ENCODE measurements at regions of chr9 and their contacts with region 1.

Region 1: GRCh38 chr9:38352530-38353328 is 39.8 kb upstream of the ALDH1B1 start:
- DNase-seq: no peak
- ATAC-seq: no peak
- H3K4me3 Mint-ChIP-seq: no peak overlapping the region
- H3K27ac Mint-ChIP-seq: no peak overlapping the region
- H3K4me1 Mint-ChIP-seq: no peaks in the 10 kb centered on the region
- H3K27me3 Mint-ChIP-seq: no peaks in the 10 kb centered on the region

Region 2: DNA sequence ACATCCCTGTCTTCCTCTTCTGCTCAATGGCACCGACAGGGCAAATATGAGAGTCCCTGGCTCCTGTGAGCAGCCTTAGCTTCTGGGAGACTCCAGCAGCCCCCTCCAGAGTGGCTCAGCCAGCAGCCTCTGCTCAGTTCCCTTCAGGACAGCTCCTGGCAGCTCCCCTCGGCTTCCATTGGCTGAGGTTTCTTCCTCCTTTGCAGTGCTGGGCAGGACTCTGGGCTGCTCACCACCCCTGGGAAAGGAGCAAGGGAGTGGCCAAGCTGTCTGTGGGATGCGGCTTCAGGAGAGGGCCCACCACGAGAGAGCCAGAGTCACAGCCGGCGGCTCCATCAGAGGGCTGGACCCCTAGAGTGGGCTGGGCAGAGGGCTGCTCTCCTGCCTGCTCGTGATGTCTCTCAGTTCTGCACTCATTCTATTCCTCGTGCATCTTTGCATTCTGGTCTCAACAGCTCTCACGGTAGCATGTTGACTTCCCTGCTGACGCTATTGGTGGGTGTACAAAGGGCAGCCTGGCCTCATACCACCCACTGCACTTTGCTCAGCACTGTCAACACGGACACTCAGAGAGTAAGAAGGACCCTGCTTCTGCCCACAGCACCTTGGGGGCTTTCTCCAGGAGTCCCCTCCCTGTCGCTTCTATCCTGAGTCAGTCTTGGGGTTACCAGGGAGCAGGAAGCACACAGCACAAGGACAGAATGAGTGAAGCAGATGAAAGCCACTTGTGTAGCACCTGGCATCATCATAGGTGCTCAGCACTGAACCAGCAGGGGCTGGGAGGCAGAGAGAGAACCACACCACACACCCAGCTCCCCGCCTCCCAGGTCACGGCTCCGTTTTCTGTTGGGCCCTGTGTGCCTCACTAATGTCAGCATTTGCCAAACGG is 41.1 kb before region 1 on chr9:
- CTCF ChIA-PET with region 1: no interaction called
- POLR2A ChIA-PET with region 1: no interaction called
- intact Hi-C with region 1: loop called in 1 of 2 experiments (anchors 5 kb)
- DNase-seq: no peak
- ATAC-seq: no peak
- H3K4me3 Mint-ChIP-seq: no peak overlapping the region
- H3K27ac Mint-ChIP-seq: no peak overlapping the region
- H3K4me1 Mint-ChIP-seq: no peaks in the 10 kb centered on the region
- H3K27me3 Mint-ChIP-seq: peaks cover 8% of the 10 kb centered on the region

Region 3: GRCh38 chr9:38392235-38393127 is 39.8 kb after region 1 on chr9 and contains the start of gene ALDH1B1:
- CTCF ChIA-PET with region 1: no interaction called
- POLR2A ChIA-PET with region 1: interaction called, 3 read pairs
- intact Hi-C with region 1: loop called in 1 of 2 experiments (anchors 5 kb)
- DNase-seq: peak; percentile 81
- ATAC-seq: peak; percentile 99
- H3K4me3 Mint-ChIP-seq: peak within 1 kb of the TSS; percentile 91
- H3K27ac Mint-ChIP-seq: peak within 1 kb of the TSS; percentile 83
- H3K4me1 Mint-ChIP-seq: peaks cover 13% of the 10 kb centered on the region
- H3K27me3 Mint-ChIP-seq: peaks cover 6% of the 10 kb centered on the region
- total RNA-seq, gene ALDH1B1: 20.3 to 21.8 TPM